Activated CD8-positive, alpha-beta T cell treated with anti-CD3 and anti-CD28 coated beads, Interleukin-2, amount 10 ng/mL, durations not matched to agents 7 days and 5 days (primary cell): ENCODE measurements at regions of chr20 and their contacts with region 1.

Region 1: GRCh38 chr20:45415774-45416637 is at the start of gene PIGT:
- DNase-seq: peak; percentile 92
- ATAC-seq: peak; percentile 97
- H3K4me3 Mint-ChIP-seq: peak within 1 kb of the TSS; percentile 93
- H3K27ac Mint-ChIP-seq: peak within 1 kb of the TSS; percentile 90
- H3K4me1 Mint-ChIP-seq: peaks cover 42% of the 10 kb centered on the region
- H3K27me3 Mint-ChIP-seq: peaks cover 2% of the 10 kb centered on the region
- total RNA-seq, gene PIGT: 59.6 to 62.4 TPM

Region 2: DNA sequence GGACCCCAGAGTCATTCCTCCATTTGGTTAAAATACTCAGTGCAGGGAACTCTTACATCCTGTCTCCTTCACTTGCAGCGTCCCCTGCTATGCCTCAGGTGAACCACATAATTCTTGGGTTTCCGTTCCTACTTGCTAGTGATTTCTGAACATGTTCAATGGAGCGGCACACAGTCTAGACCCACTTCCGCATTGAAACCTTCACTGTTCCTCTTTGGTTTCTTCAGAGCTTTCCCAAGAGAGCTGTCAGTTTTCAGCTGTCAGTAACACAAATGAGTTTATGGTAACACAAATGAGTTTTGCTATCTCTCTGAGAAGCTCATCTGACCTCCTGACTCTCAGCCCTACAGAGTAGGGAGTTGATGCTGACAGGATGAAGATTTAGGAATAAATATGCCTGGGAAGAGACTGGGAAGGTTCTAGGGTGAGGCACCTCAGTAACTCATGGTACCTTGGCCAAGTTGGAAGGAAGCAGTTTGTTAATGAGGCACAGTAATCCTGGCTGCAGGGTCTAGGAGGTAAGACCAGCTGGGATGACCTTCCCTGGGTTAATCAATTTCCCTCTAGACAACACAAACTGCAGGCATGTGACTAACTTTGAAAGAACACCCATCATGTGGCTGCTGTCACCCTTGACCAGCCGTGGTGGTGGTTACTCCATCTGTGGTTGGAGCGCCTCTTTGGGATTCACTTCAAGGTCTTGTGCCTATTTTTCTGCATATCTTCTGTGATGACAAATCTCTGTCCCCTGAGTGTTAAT is 47.6 kb before region 1 on chr20:
- CTCF ChIA-PET with region 1: interaction called, 40 read pairs
- POLR2A ChIA-PET with region 1: interaction called, 19 read pairs
- DNase-seq: peak; percentile 56
- ATAC-seq: peak; percentile 57
- H3K4me3 Mint-ChIP-seq: peak overlapping the region; percentile 48
- H3K27ac Mint-ChIP-seq: peak overlapping the region; percentile 69
- H3K4me1 Mint-ChIP-seq: peaks cover 65% of the 10 kb centered on the region
- H3K27me3 Mint-ChIP-seq: no peaks in the 10 kb centered on the region

Region 3: DNA sequence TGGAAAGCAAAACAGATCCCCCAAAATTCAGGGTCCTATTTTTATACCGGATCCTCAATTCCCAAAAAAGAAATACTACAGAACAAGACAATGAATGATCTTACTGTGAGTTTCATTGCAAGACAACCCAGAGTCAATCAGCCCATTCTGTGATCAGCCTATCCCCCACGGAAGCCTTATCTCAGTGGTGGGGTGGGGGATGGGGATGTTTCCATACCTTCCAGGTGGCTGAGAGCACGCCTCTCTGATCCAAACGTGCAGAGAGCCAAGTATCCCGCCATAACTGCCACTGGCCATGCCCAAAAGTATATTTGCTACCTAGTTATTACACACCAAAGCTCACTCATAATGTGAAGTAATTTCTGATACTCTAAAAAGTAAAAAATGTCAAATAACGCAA is 68.7 kb after region 1 on chr20:
- CTCF ChIA-PET with region 1: no interaction called
- POLR2A ChIA-PET with region 1: no interaction called
- DNase-seq: no peak
- ATAC-seq: no peak
- H3K4me3 Mint-ChIP-seq: no peak overlapping the region
- H3K27ac Mint-ChIP-seq: no peak overlapping the region
- H3K4me1 Mint-ChIP-seq: no peaks in the 10 kb centered on the region
- H3K27me3 Mint-ChIP-seq: peaks cover 42% of the 10 kb centered on the region

Region 4: DNA sequence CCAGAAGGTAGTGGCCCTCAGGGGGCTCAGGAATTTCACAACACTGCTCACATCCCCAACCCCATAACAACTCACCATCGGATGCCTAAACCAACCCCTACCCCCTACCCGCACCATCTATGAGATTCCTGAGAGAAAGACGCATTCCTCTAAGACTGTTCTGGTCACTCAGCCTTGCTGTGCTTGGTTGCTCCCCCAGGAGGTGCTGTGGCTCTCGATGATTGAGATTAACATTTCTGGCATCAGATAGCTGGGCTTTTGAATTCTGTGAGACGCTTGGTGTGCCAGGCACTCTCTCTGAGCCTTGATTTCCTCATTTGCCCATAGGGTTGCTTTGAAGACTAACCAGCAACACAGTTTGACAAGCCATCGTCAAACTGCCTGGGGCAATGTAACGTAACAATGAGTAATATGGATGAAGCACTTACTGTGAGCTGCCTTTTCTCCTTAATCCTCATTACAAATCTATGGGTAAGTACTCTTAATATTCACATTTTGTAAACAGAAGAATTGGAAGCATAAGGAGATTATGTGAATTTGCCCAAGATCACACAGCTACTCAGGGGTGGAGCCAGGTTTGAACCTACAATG is 122.3 kb after region 1 on chr20:
- CTCF ChIA-PET with region 1: no interaction called
- POLR2A ChIA-PET with region 1: no interaction called
- DNase-seq: no peak
- ATAC-seq: no peak
- H3K4me3 Mint-ChIP-seq: no peak overlapping the region
- H3K27ac Mint-ChIP-seq: no peak overlapping the region
- H3K4me1 Mint-ChIP-seq: no peaks in the 10 kb centered on the region
- H3K27me3 Mint-ChIP-seq: peaks cover 4% of the 10 kb centered on the region

Region 5: GRCh38 chr20:45555198-45555597 is 139.2 kb after region 1 on chr20:
- CTCF ChIA-PET with region 1: no interaction called
- POLR2A ChIA-PET with region 1: no interaction called
- DNase-seq: no peak
- ATAC-seq: no peak
- H3K4me3 Mint-ChIP-seq: no peak overlapping the region
- H3K27ac Mint-ChIP-seq: no peak overlapping the region
- H3K4me1 Mint-ChIP-seq: no peaks in the 10 kb centered on the region
- H3K27me3 Mint-ChIP-seq: peaks cover 9% of the 10 kb centered on the region